Caco-2 (cell line): ENCODE measurements at regions of chr21 and their contacts with region 1.

Region 1: GRCh38 chr21:32958288-32959002 is 67.3 kb upstream of the OLIG2 start:
- DNase-seq: no peak
- H3K4me3 ChIP-seq: no peak overlapping the region
- H3K4me3 Mint-ChIP-seq: no peak overlapping the region
- H3K27ac Mint-ChIP-seq: no peak overlapping the region
- H3K4me1 ChIP-seq: no peaks in the 10 kb centered on the region
- H3K4me1 Mint-ChIP-seq: no peaks in the 10 kb centered on the region
- H3K27me3 ChIP-seq: peaks cover 1% of the 10 kb centered on the region; the same call in 1 of the 2 replicates
- H3K27me3 Mint-ChIP-seq: peaks cover 39% of the 10 kb centered on the region
- CTCF ChIP-seq: no peak

Region 2: DNA sequence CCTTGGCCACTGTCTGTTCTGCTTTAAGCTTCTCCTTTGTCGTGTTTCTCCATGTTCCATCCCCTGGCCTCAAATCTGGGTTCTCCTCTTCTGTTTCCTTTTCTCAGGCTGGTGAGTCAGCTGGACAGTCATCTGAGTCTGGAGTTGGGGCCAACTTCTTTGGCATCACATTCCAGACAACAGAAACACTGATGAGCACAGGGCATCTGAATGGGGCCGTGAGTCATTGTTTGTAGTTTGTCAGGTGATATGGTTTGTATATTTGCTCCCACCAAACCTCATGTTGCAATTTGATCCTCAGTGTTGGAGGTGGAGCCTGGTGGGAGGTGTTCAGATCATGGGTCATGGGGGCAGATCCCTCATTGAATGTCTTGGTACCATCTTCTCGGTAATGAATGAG is 53.0 kb after region 1 on chr21:
- CTCF ChIA-PET with region 1: no interaction called
- POLR2A ChIA-PET with region 1: no interaction called
- intact Hi-C with region 1: no loop called
- DNase-seq: no peak
- H3K4me3 ChIP-seq: no peak overlapping the region
- H3K4me3 Mint-ChIP-seq: no peak overlapping the region
- H3K27ac Mint-ChIP-seq: no peak overlapping the region
- H3K4me1 ChIP-seq: no peaks in the 10 kb centered on the region
- H3K4me1 Mint-ChIP-seq: peaks cover 9% of the 10 kb centered on the region
- H3K27me3 ChIP-seq: no peaks in the 10 kb centered on the region
- H3K27me3 Mint-ChIP-seq: peaks cover 13% of the 10 kb centered on the region
- CTCF ChIP-seq: no peak

Region 3: GRCh38 chr21:33273039-33273438 is 314.6 kb after region 1 on chr21:
- CTCF ChIA-PET with region 1: no interaction called
- POLR2A ChIA-PET with region 1: no interaction called
- intact Hi-C with region 1: loop called (anchors 10 kb)
- DNase-seq: no peak
- H3K4me3 ChIP-seq: no peak overlapping the region
- H3K4me3 Mint-ChIP-seq: no peak overlapping the region
- H3K27ac Mint-ChIP-seq: no peak overlapping the region
- H3K4me1 ChIP-seq: peaks cover 3% of the 10 kb centered on the region; the same call in 1 of the 2 replicates
- H3K4me1 Mint-ChIP-seq: peaks cover 10% of the 10 kb centered on the region
- H3K27me3 ChIP-seq: no peaks in the 10 kb centered on the region
- H3K27me3 Mint-ChIP-seq: no peaks in the 10 kb centered on the region
- CTCF ChIP-seq: no peak